Gastrocnemius medialis (tissue), 4 donors: ENCODE measurements at regions of chr7 and their contacts with region 1.

Region 1: DNA sequence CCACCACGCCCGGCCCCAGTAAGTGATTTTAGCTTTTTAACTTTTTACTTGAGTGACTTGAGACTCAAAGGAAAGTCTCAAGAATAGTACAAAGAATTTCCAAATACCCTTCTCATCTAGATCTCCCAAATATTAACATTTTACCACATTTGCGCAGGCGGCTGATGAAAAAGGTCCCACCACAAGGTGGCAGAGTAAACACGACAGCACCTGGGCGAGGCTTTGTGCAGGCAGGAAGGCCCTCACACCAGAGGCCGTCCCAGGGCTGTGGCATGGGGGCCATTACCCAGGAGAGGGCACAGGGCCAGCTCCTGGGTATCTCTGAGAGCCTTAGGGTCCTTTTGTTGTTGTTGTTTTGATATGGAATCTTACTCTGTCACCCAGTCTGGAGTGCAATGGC is 50.0 kb upstream of the WIPI2 start:
- DNase-seq: no peak
- ATAC-seq: no peak
- H3K4me3 ChIP-seq: no peak overlapping the region
- H3K27ac ChIP-seq: no peak overlapping the region
- H3K4me1 ChIP-seq: no peaks in the 10 kb centered on the region
- H3K27me3 ChIP-seq: no peaks in the 10 kb centered on the region
- CTCF ChIP-seq: no peak
- POLR2A ChIP-seq: no peak

Region 2: GRCh38 chr7:3649250-3649649 is 1490.7 kb before region 1 on chr7:
- in situ Hi-C with region 1: no loop called
- intact Hi-C with region 1: loop called (anchors 5 kb)
- DNase-seq: no peak
- ATAC-seq: no peak
- H3K4me3 ChIP-seq: no peak overlapping the region
- H3K27ac ChIP-seq: no peak overlapping the region
- H3K4me1 ChIP-seq: no peaks in the 10 kb centered on the region
- H3K27me3 ChIP-seq: no peaks in the 10 kb centered on the region
- CTCF ChIP-seq: no peak
- POLR2A ChIP-seq: no peak